Sigmoid colon (tissue), 7 donors: ENCODE measurements at regions of chr11 and their contacts with region 1.

Region 1: GRCh38 chr11:62573592-62574362 is at the start of gene EEF1G:
- DNase-seq: peak; percentile 99
- H3K4me3 ChIP-seq: peak within 1 kb of the TSS; percentile 64 to 92 (median 78)
- H3K27ac ChIP-seq: peak within 1 kb of the TSS; percentile 91 to 94 (median 93)
- H3K4me1 ChIP-seq: peaks cover 0 to 53% (median 35%) of the 10 kb centered on the region in 4 donors
- H3K27me3 ChIP-seq: no peaks in the 10 kb centered on the region
- CTCF ChIP-seq: no peak
- EP300 ChIP-seq: peak in 1 of 4 donors; percentile 60
- POLR2A ChIP-seq: peak; percentile 92 to 93
- total RNA-seq, gene EEF1G: 1,344 to 1,788 (median 1,576) TPM

Region 2: GRCh38 chr11:62591448-62592145 is 17.8 kb after region 1 on chr11 and contains the start of gene TUT1:
- intact Hi-C with region 1: loop called (anchors 2 kb)
- DNase-seq: peak; percentile 99
- H3K4me3 ChIP-seq: peak within 1 kb of the TSS; percentile 57 to 83 (median 71)
- H3K27ac ChIP-seq: peak within 1 kb of the TSS; percentile 91 to 97 (median 97)
- H3K4me1 ChIP-seq: peaks cover 0 to 33% (median 28%) of the 10 kb centered on the region in 4 donors
- H3K27me3 ChIP-seq: no peaks in the 10 kb centered on the region
- CTCF ChIP-seq: no peak
- EP300 ChIP-seq: peak in 1 of 4 donors; percentile 61
- POLR2A ChIP-seq: peak; percentile 79 to 80
- total RNA-seq, gene TUT1: 5.4 to 7.1 (median 6.2) TPM

Region 3: GRCh38 chr11:62656796-62657429 is 83.1 kb after region 1 on chr11:
- intact Hi-C with region 1: no loop called
- DNase-seq: no peak
- H3K4me3 ChIP-seq: no peak overlapping the region
- H3K27ac ChIP-seq: no peak overlapping the region
- H3K4me1 ChIP-seq: peaks cover 0 to 11% (median 8%) of the 10 kb centered on the region in 4 donors
- H3K27me3 ChIP-seq: no peaks in the 10 kb centered on the region
- CTCF ChIP-seq: no peak
- EP300 ChIP-seq: no peak
- POLR2A ChIP-seq: no peak